Common myeloid progenitor, CD34-positive (primary cell): ENCODE measurements at regions of chr10 and their contacts with region 1.

Region 1: DNA sequence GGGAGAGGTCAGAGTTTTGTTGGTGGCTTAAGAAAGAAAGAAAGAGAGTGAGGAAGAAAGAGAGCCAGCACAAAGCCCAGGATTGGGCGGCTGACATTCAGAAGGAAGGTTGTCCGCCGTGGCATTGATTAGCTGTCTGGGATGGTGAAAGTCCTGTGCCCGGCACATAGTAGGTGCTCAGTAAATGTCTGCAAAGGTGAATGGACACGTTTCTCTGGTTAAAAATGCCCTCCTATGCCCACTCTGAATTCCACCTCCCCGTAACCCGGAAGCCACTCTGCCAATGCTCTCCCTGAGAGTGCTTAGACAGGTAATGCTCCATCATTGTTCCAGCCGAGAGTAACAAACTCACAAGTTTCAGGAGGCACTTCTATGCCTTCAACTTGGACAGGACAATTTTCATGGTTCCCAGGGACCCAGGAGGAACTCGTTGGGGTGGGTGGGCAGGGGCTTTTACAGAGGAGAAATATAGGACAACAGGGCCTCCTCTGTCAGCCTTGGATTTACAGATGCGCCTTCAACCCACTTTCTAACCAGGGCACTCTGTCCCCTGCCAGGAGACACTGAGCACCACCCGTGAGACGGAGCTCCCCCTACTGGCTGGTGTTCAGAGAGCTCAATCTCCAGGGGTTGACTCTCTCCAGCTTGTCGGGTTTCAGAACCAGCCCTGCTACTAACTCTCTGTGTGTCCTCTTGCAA is 411.5 kb upstream of the ZMIZ1 start:
- DNase-seq: peak; percentile 64 to 82 (median 72)
- H3K4me3 ChIP-seq: no peak overlapping the region
- H3K27ac ChIP-seq: no peak overlapping the region
- H3K4me1 ChIP-seq: peaks cover 0 to 9% (median 1%) of the 10 kb centered on the region in 4 experiments
- H3K27me3 ChIP-seq: peaks cover 0 to 7% (median 0%) of the 10 kb centered on the region in 5 experiments

Region 2: GRCh38 chr10:78640796-78641636 is 16.3 kb before region 1 on chr10:
- CTCF ChIA-PET with region 1: interaction called, 18 read pairs
- POLR2A ChIA-PET with region 1: interaction called, 3 read pairs
- DNase-seq: peak; percentile 42 to 91 (median 88)
- H3K4me3 ChIP-seq: no peak overlapping the region
- H3K27ac ChIP-seq: no peak overlapping the region
- H3K4me1 ChIP-seq: peaks cover 2 to 30% (median 11%) of the 10 kb centered on the region in 4 experiments
- H3K27me3 ChIP-seq: no peaks in the 10 kb centered on the region